Activated naive CD4-positive, alpha-beta T cell treated with anti-CD3 and anti-CD28 coated beads, Interleukin-2, amount 10 ng/mL, durations not matched to agents 7 days and 5 days (primary cell): ENCODE measurements at regions of chr10 and their contacts with region 1.

Region 1: GRCh38 chr10:97914837-97915211 is 65.2 kb downstream of the GOLGA7B start:
- DNase-seq: peak; percentile 84
- H3K4me3 Mint-ChIP-seq: no peak overlapping the region
- H3K27ac Mint-ChIP-seq: no peak overlapping the region
- H3K4me1 Mint-ChIP-seq: peaks cover 2% of the 10 kb centered on the region
- H3K27me3 Mint-ChIP-seq: peaks cover 32% of the 10 kb centered on the region

Region 2: GRCh38 chr10:97664282-97664850 is 250.5 kb before region 1 on chr10:
- CTCF ChIA-PET with region 1: no interaction called
- DNase-seq: no peak
- H3K4me3 Mint-ChIP-seq: no peak overlapping the region
- H3K27ac Mint-ChIP-seq: peak overlapping the region; percentile 11
- H3K4me1 Mint-ChIP-seq: peaks cover 3% of the 10 kb centered on the region
- H3K27me3 Mint-ChIP-seq: no peaks in the 10 kb centered on the region

Region 3: DNA sequence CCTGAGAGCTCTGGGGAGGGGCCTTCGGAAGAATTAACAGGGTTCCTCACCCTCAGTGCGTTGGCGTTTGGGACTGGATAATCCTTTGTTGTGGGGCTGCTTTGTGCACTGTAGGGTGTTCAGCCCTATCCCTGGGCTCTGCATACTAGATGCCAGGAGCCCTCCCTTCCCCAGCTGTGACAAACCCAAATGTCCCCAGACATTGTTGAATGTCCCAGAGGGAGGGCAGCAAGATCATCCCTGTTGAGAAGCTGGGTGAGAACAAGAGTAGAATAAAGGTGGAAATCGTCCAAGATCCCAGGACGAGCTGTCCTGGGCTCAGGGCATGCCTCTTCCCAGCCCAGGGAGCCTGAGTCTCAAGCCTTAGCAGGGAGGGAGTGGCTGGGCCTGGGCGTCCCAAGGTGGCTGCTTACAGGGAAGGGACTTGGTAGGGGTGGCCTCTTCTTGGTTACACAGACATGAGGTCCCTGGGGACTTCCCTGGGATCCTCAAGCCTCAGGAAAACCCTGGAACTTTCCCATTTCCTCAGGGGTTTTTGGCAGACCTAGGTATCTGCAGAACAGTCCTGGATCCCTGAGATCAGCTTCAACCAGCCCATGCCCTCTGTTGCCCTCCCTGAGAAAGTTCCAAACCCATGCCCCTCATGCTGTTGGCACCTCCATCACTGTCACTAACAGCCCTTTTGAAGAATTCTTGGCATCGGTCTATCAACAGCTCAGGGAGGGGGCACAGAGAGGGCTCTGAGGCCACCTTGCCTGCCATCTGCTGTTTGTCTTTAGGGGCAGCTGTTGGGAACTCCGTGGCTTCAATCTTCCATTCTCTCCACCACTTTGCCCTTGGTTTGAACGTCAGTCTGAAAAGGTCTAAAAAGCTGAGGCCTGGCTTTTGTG is 11.5 kb before region 1 on chr10:
- CTCF ChIA-PET with region 1: interaction called, 13 read pairs
- DNase-seq: no peak
- H3K4me3 Mint-ChIP-seq: no peak overlapping the region
- H3K27ac Mint-ChIP-seq: no peak overlapping the region
- H3K4me1 Mint-ChIP-seq: no peaks in the 10 kb centered on the region
- H3K27me3 Mint-ChIP-seq: peaks cover 40% of the 10 kb centered on the region

Region 4: DNA sequence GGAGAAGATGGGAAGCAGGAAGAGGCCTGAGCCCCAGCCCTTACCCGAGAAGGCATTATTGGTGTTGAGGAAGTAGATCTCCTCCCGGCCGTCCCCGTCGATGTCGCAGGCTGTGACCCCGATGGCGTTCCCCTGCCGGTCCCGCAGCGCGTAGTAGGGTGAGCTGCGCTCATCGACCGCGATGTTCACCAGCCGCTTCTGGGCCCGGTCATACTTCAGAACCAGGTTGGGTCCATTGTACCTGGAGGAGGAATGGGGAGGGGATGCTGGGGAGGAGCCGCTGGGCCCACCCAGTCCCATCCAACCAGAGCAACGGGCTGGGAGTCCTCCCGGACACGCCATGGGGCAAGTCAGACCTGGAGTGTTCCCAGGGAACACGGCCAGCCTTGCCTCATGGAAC is 21.3 kb after region 1 on chr10:
- CTCF ChIA-PET with region 1: no interaction called
- DNase-seq: no peak
- H3K4me3 Mint-ChIP-seq: no peak overlapping the region
- H3K27ac Mint-ChIP-seq: no peak overlapping the region
- H3K4me1 Mint-ChIP-seq: no peaks in the 10 kb centered on the region
- H3K27me3 Mint-ChIP-seq: peaks cover 35% of the 10 kb centered on the region

Region 5: GRCh38 chr10:98038288-98038687 is 123.5 kb after region 1 on chr10:
- CTCF ChIA-PET with region 1: interaction called, 140 read pairs
- DNase-seq: no peak
- H3K4me3 Mint-ChIP-seq: no peak overlapping the region
- H3K27ac Mint-ChIP-seq: no peak overlapping the region
- H3K4me1 Mint-ChIP-seq: no peaks in the 10 kb centered on the region
- H3K27me3 Mint-ChIP-seq: peaks cover 87% of the 10 kb centered on the region

Region 6: GRCh38 chr10:98045785-98046389 is 131.1 kb after region 1 on chr10:
- CTCF ChIA-PET with region 1: interaction called, 140 read pairs
- DNase-seq: peak; percentile 71
- H3K4me3 Mint-ChIP-seq: no peak overlapping the region
- H3K27ac Mint-ChIP-seq: no peak overlapping the region
- H3K4me1 Mint-ChIP-seq: no peaks in the 10 kb centered on the region
- H3K27me3 Mint-ChIP-seq: peaks cover 41% of the 10 kb centered on the region

Region 7: GRCh38 chr10:98331885-98332284 is 417.1 kb after region 1 on chr10:
- CTCF ChIA-PET with region 1: no interaction called
- DNase-seq: peak; percentile 36
- H3K4me3 Mint-ChIP-seq: no peak overlapping the region
- H3K27ac Mint-ChIP-seq: no peak overlapping the region
- H3K4me1 Mint-ChIP-seq: no peaks in the 10 kb centered on the region
- H3K27me3 Mint-ChIP-seq: peaks cover 48% of the 10 kb centered on the region